ENCODE measurements at regions of chr2 and their contacts with region 1.

Region 1: DNA sequence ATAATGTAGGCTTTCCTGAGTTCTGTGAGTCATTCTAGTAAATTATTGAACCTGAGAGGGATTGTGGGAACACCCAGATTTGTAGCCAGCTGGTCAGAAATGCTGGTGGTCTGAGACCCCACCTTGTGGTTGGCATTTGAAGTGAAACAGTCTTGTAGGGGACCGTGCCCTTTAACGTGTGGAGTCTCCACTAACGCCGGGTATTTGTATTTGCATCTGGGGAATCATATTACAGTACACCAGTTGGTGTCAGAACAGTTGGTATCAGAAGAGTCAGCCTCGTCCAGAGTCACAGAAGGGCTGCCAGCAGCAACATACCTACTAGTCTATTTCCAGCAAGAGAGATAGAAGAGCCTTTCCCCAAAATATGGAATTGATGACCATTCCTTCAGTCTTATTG is 38.3 kb upstream of the PTPN4 start:
- DNase-seq: no peak
- H3K4me3 ChIP-seq: no peak overlapping the region
- H3K27ac ChIP-seq: no peak overlapping the region
- H3K4me1 ChIP-seq: peaks cover 0 to 6% (median 1%) of the 10 kb centered on the region in 4 experiments; a peak in 2 of 7 replicates
- H3K27me3 ChIP-seq: no peaks in the 10 kb centered on the region
- CTCF ChIP-seq: peak; percentile 31 to 39 (median 37); a peak in 3 of 4 replicates
- EP300 ChIP-seq: no peak
- POLR2A ChIP-seq: no peak
- RAD21 ChIP-seq: peak in 1 of 2 experiments; percentile 39; a peak in 2 of 4 replicates

Region 2: GRCh38 chr2:119431155-119431975 is 290.1 kb before region 1 on chr2 and contains the start of gene TMEM37:
- CTCF ChIA-PET with region 1: no interaction called
- POLR2A ChIA-PET with region 1: no interaction called
- DNase-seq: peak; percentile 50 to 79
- H3K4me3 ChIP-seq: peak within 1 kb of the TSS; percentile 58 to 72 (median 68)
- H3K27ac ChIP-seq: peak within 1 kb of the TSS; percentile 65; the same call in 1 of the 2 replicates
- H3K4me1 ChIP-seq: peaks cover 0 to 28% (median 15%) of the 10 kb centered on the region in 4 experiments; a peak in 6 of 7 replicates
- H3K27me3 ChIP-seq: peaks cover 0 to 14% (median 6%) of the 10 kb centered on the region in 4 experiments; a peak in 6 of 7 replicates
- CTCF ChIP-seq: no peak
- EP300 ChIP-seq: no peak
- POLR2A ChIP-seq: peak in 1 of 2 experiments; percentile 26; a peak in 1 of 3 replicates
- RAD21 ChIP-seq: no peak; a peak in 1 of 4 replicates
- total RNA-seq, gene TMEM37: 9.9 and 11.0 TPM in 2 replicates

Region 3: GRCh38 chr2:119668546-119668945 is 52.9 kb before region 1 on chr2:
- CTCF ChIA-PET with region 1: no interaction called
- POLR2A ChIA-PET with region 1: no interaction called
- DNase-seq: no peak
- H3K4me3 ChIP-seq: no peak overlapping the region
- H3K27ac ChIP-seq: no peak overlapping the region
- H3K4me1 ChIP-seq: peaks cover 3 to 11% (median 10%) of the 10 kb centered on the region in 4 experiments; a peak in 6 of 7 replicates
- H3K27me3 ChIP-seq: no peaks in the 10 kb centered on the region
- CTCF ChIP-seq: no peak
- EP300 ChIP-seq: no peak
- POLR2A ChIP-seq: no peak
- RAD21 ChIP-seq: no peak

Region 4: GRCh38 chr2:119702918-119703401 is 18.5 kb before region 1 on chr2:
- CTCF ChIA-PET with region 1: interaction called, 11 read pairs
- POLR2A ChIA-PET with region 1: interaction called, 7 read pairs
- DNase-seq: peak; percentile 44 to 91
- H3K4me3 ChIP-seq: no peak overlapping the region
- H3K27ac ChIP-seq: no peak overlapping the region
- H3K4me1 ChIP-seq: peaks cover 16 to 33% (median 21%) of the 10 kb centered on the region in 4 experiments; a peak in 6 of 7 replicates
- H3K27me3 ChIP-seq: no peaks in the 10 kb centered on the region
- CTCF ChIP-seq: peak; percentile 96 to 98 (median 98)
- EP300 ChIP-seq: peak in 1 of 2 experiments; percentile 51; a peak in 1 of 3 replicates
- POLR2A ChIP-seq: no peak
- RAD21 ChIP-seq: peak; percentile 95

Measured in H1 (cell line).